ENCODE measurements at regions of chr22 and their contacts with region 1.

Region 1: DNA sequence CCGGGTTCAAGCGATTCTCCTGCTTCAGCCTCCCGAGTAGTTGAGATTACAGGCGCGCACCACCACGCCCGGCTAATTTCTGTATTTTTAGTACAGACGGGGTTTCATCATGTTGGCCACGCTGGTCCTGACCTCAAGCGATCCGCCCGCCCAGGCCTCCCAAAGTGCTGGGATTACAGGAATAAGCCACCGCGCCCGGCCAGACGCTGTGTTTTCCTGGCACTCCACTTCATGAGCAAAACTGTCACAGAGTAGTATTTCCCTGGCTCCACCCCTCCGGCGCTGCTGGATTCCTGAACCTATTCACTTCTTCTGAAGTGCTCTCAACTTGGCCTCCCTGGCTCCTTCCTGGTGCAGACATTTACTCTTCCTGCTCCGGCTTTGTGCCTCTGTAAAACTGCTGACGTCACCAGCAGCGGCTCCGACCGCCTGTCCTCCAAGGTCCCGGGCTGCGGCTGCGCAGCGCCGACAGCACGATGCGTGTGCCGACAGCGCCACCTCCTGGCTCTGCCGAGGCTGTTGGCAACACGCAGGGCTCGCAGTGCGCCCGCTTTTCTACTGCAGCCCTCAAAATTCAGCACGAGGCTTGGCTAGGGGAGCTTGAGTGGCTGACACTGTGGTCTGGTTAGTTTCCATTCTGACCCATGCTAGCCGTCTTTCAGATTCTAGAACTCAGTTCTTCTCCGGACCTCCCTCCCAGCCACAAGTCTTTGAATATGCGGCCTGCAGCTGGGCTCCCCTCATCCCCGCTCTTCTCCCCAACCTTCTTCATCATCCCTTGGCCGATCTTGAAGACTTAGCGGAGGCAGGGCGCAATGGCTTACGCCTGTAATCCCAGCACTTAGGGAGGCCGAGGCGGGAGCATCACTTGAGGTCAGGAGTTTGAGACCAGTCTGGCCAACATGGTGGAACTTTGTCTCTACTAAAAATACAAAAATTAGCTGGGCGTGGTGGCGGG is 36.6 kb downstream of the APOL3 start:
- DNase-seq: peak; percentile 85 to 91
- ATAC-seq: peak; percentile 96 to 98
- H3K4me3 ChIP-seq: peak overlapping the region; percentile 29 to 44 (median 40)
- H3K27ac ChIP-seq: peak overlapping the region; percentile 77 to 84 (median 83)
- H3K4me1 ChIP-seq: peaks cover 0 to 4% of the 10 kb centered on the region in 2 donors
- H3K27me3 ChIP-seq: no peaks in the 10 kb centered on the region
- CTCF ChIP-seq: peak; percentile 96 to 99 (median 98)
- POLR2A ChIP-seq: peak in 1 of 2 donors; percentile 24

Region 2: DNA sequence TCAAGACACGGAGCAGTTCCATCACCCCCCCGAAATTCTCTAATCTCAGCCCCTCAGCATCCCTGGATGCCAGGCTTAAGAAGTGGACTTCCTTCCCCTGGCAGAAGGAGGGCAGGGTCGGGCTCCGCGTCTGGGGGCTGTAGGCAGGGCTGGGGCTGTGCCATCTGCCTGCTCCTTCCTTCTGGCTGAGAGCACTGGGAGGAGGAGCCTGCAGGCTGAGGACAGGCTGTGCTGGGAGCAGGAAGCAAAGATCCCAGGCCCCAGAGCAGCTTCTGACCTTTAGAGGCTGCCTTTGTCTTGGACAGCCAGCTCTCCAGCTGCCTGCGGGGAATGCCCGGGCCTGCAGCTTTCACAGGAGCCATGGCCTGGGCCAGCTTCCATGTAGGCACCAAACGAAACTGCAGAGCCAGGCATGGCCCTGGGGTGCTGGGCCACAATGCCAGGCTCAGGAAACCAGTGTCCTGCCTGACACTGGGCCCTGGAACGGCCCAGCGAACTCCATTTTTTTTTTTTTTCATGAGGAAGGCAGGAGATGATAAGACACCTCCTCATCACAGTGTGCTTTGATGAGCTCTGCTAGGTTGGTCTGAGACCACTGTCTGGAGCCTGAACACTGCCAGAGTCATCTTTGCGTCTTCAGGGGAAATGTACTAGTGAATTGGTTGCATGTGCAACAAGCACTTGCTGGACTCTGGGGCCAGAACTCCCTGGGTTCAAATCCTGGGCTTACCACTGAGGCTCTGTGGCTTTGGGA is 656.1 kb before region 1 on chr22:
- in situ Hi-C with region 1: loop called in 1 of 4 experiments (anchors 25 kb)
- intact Hi-C with region 1: no loop called
- DNase-seq: peak; percentile 68 to 82
- ATAC-seq: peak; percentile 75 to 86
- H3K4me3 ChIP-seq: no peak overlapping the region
- H3K27ac ChIP-seq: peak overlapping the region; percentile 61 to 83 (median 76)
- H3K4me1 ChIP-seq: peaks cover 10 to 38% of the 10 kb centered on the region in 2 donors
- H3K27me3 ChIP-seq: no peaks in the 10 kb centered on the region
- CTCF ChIP-seq: no peak
- POLR2A ChIP-seq: no peak

Region 3: DNA sequence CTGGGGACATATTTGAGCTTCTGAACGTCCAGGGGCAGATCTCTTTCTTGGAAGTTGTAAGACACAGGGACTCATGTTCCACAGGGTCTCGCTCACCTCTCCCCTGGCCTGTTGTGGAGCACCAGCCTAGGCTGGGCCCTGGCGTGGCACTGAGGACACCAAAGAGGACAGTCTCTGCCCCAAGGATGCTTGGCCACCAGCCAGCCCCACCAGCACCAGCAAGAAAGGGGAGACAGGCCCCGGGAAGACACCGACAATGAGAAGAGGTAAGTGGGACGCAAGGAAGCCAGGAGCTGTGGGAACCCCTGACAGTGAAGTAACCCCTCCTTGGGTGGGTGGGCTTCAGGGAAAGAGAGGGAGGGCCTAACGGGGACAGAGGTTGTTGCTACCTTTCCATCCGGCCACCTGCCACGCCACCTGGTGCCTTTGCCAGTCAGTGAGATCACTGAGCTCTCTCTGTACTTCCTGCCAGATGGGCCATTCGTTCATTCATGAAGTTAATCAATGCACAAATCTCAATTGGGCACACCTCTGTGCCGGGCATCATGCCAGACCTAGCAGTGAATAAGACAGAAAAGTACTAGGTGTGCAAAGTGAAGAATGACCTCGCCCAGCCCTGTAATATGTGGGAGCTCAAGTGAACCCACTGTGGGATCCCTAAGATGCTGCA is 395.2 kb before region 1 on chr22:
- in situ Hi-C with region 1: no loop called
- intact Hi-C with region 1: loop called (anchors 10 kb)
- DNase-seq: no peak
- ATAC-seq: no peak
- H3K4me3 ChIP-seq: no peak overlapping the region
- H3K27ac ChIP-seq: no peak overlapping the region
- H3K4me1 ChIP-seq: peaks cover 2 to 6% of the 10 kb centered on the region in 2 donors
- H3K27me3 ChIP-seq: no peaks in the 10 kb centered on the region
- CTCF ChIP-seq: no peak
- POLR2A ChIP-seq: no peak

Region 4: GRCh38 chr22:35938226-35938625 is 185.7 kb before region 1 on chr22:
- in situ Hi-C with region 1: loop called in 3 of 4 experiments (anchors 5 to 10 kb)
- intact Hi-C with region 1: loop called (anchors 1 kb)
- DNase-seq: no peak
- ATAC-seq: no peak
- H3K4me3 ChIP-seq: no peak overlapping the region
- H3K27ac ChIP-seq: no peak overlapping the region
- H3K4me1 ChIP-seq: no peaks in the 10 kb centered on the region
- H3K27me3 ChIP-seq: no peaks in the 10 kb centered on the region
- CTCF ChIP-seq: no peak
- POLR2A ChIP-seq: no peak

Region 5: GRCh38 chr22:36028646-36029405 is 95.1 kb before region 1 on chr22 and contains the start of gene RBFOX2:
- in situ Hi-C with region 1: no loop called
- intact Hi-C with region 1: no loop called
- DNase-seq: peak; percentile 96 to 97
- ATAC-seq: peak; percentile 90 to 91
- H3K4me3 ChIP-seq: peak within 1 kb of the TSS; percentile 72 to 80 (median 74)
- H3K27ac ChIP-seq: peak within 1 kb of the TSS; percentile 83 to 92 (median 86)
- H3K4me1 ChIP-seq: peaks cover 13 to 15% of the 10 kb centered on the region in 2 donors
- H3K27me3 ChIP-seq: no peaks in the 10 kb centered on the region
- CTCF ChIP-seq: no peak
- POLR2A ChIP-seq: peak; percentile 56 to 67
- total RNA-seq, gene RBFOX2: 26.0 to 32.1 (median 28.6) TPM

Region 6: DNA sequence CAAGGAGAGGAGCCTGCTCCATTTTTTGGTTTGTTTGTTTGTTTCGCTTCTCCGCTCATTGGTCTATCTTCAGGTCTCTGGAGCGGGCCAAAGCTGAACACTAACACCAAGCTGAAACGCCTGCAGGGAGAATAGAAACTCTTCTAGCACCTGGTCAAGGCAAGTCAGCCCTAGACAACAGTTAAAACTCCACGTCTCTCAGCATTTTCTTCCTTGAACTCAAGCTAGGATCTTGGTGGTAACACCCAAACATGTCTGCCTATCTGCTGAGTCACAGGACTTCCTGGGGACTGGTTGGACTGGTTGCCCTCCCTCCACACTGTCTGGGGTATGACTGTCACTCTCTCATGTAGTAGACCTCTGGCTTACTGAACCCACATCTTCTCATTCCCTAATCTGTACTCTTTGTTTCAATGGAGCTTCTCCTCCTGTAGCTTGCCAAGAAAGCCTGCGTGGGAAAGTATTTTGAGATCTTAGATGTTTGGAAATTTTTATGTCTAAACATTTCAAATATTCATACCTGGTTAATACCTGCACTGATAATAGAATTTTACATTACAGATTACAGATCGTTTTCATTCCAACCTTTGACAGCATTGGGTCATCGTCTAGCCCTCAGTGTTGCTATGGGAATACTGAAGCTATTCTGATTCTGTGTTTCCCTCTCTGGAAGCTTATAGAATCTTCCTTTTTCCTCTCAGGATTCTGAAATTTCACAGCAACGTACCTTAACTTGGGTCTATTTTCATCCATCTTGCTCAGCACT is 71.3 kb before region 1 on chr22:
- in situ Hi-C with region 1: no loop called
- intact Hi-C with region 1: no loop called
- DNase-seq: no peak
- ATAC-seq: no peak
- H3K4me3 ChIP-seq: no peak overlapping the region
- H3K27ac ChIP-seq: no peak overlapping the region
- H3K4me1 ChIP-seq: peaks cover 12 to 13% of the 10 kb centered on the region in 2 donors
- H3K27me3 ChIP-seq: no peaks in the 10 kb centered on the region
- CTCF ChIP-seq: no peak
- POLR2A ChIP-seq: no peak

Measured in gastrocnemius medialis (tissue), 4 donors.